ENCODE measurements at regions of chr10 and their contacts with region 1.

Region 1: GRCh38 chr10:79195091-79195923 is 126.5 kb downstream of the ZMIZ1 start:
- DNase-seq: peak; percentile 84
- H3K4me3 Mint-ChIP-seq: no peak overlapping the region
- H3K27ac Mint-ChIP-seq: no peak overlapping the region
- H3K4me1 Mint-ChIP-seq: peaks cover 5% of the 10 kb centered on the region
- H3K27me3 Mint-ChIP-seq: no peaks in the 10 kb centered on the region

Region 2: GRCh38 chr10:77846718-77847630 is 1348.3 kb before region 1 on chr10:
- CTCF ChIA-PET with region 1: no interaction called
- intact Hi-C with region 1: loop called (anchors 10 kb)
- DNase-seq: peak; percentile 76
- H3K4me3 Mint-ChIP-seq: no peak overlapping the region
- H3K27ac Mint-ChIP-seq: no peak overlapping the region
- H3K4me1 Mint-ChIP-seq: peaks cover 3% of the 10 kb centered on the region
- H3K27me3 Mint-ChIP-seq: no peaks in the 10 kb centered on the region

Region 3: DNA sequence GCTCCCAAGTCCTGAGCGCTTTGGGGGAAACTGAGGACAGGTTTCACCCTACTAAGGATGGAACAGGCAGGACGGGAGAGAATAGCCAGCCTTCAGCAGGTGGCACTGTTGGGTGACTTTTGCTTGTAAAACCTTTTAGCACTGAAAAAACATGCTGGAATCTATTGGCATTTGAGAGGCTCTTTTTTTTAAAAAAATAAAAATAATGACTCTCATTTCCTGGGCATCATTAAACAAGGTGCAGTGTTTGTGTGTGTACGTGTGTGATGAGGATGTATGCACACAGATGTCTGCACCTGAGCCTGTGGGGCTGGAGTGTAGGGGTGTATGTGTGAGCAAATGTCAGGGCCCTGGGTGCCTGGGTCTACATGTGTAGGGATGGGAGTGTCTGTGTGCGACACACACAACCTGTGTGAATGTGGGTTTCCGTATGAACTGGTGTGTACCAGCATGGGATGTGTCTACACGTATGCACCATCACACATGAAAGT is 983.7 kb before region 1 on chr10:
- CTCF ChIA-PET with region 1: interaction called, 5 read pairs
- intact Hi-C with region 1: loop called (anchors 1 kb)
- DNase-seq: peak; percentile 47
- H3K4me3 Mint-ChIP-seq: no peak overlapping the region
- H3K27ac Mint-ChIP-seq: no peak overlapping the region
- H3K4me1 Mint-ChIP-seq: peaks cover 1% of the 10 kb centered on the region
- H3K27me3 Mint-ChIP-seq: peaks cover 4% of the 10 kb centered on the region

Region 4: DNA sequence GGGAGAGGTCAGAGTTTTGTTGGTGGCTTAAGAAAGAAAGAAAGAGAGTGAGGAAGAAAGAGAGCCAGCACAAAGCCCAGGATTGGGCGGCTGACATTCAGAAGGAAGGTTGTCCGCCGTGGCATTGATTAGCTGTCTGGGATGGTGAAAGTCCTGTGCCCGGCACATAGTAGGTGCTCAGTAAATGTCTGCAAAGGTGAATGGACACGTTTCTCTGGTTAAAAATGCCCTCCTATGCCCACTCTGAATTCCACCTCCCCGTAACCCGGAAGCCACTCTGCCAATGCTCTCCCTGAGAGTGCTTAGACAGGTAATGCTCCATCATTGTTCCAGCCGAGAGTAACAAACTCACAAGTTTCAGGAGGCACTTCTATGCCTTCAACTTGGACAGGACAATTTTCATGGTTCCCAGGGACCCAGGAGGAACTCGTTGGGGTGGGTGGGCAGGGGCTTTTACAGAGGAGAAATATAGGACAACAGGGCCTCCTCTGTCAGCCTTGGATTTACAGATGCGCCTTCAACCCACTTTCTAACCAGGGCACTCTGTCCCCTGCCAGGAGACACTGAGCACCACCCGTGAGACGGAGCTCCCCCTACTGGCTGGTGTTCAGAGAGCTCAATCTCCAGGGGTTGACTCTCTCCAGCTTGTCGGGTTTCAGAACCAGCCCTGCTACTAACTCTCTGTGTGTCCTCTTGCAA is 538.0 kb before region 1 on chr10:
- CTCF ChIA-PET with region 1: interaction called, 5 read pairs
- intact Hi-C with region 1: loop called (anchors 5 kb)
- DNase-seq: peak; percentile 85
- H3K4me3 Mint-ChIP-seq: no peak overlapping the region
- H3K27ac Mint-ChIP-seq: no peak overlapping the region
- H3K4me1 Mint-ChIP-seq: no peaks in the 10 kb centered on the region
- H3K27me3 Mint-ChIP-seq: peaks cover 9% of the 10 kb centered on the region

Region 5: GRCh38 chr10:78899996-78900714 is 295.2 kb before region 1 on chr10:
- CTCF ChIA-PET with region 1: no interaction called
- intact Hi-C with region 1: no loop called
- DNase-seq: no peak
- H3K4me3 Mint-ChIP-seq: no peak overlapping the region
- H3K27ac Mint-ChIP-seq: no peak overlapping the region
- H3K4me1 Mint-ChIP-seq: no peaks in the 10 kb centered on the region
- H3K27me3 Mint-ChIP-seq: no peaks in the 10 kb centered on the region

Region 6: DNA sequence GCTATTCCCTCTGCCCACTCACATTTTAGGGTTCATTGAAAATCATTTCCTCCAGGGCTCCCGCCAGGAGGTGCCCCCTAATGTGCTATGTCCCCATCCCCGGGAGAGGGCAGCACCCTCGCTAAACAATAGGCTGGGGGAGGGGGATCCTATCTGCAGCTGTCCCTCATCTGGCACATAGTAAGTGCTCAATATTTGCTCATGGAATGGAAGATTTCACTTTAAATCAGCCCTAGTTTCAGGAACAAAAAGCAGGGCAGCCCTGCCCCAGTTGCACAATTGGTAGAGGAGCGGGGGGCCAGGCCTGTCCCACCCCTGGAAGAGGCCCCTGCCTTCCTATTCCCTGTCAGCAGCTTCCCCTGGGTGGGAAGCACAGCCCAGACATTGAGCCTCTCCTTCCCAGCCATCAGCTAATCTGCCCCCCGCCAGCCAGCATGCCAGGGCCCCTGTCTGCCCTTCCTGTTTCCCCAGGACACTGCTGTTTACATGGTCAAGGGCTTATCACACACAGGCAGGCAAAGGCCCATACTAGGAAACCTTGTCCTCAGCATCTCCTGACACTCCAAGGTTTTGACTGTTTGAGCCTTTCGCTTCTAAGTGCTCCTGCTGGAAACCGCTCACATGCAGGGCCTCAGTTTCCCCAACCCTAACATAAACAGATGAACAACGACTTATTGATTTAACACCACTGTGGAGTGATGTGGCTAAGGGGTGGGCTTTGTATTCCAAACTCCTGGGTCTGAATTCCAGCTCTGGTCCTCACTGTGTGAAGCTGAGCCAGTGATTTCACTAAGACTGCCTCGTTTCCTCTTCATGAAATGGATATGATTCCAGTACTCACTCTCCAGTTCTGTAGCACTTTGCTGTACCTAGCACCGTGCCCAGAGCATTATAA is 257.3 kb before region 1 on chr10:
- CTCF ChIA-PET with region 1: interaction called, 7 read pairs
- intact Hi-C with region 1: loop called (anchors 5 kb)
- DNase-seq: peak; percentile 39
- H3K4me3 Mint-ChIP-seq: no peak overlapping the region
- H3K27ac Mint-ChIP-seq: no peak overlapping the region
- H3K4me1 Mint-ChIP-seq: no peaks in the 10 kb centered on the region
- H3K27me3 Mint-ChIP-seq: no peaks in the 10 kb centered on the region

Region 7: GRCh38 chr10:78972947-78973900 is 222.1 kb before region 1 on chr10:
- CTCF ChIA-PET with region 1: interaction called, 4 read pairs
- intact Hi-C with region 1: loop called (anchors 1 kb)
- DNase-seq: peak; percentile 80
- H3K4me3 Mint-ChIP-seq: peak overlapping the region; percentile 37
- H3K27ac Mint-ChIP-seq: peak overlapping the region; percentile 8
- H3K4me1 Mint-ChIP-seq: peaks cover 9% of the 10 kb centered on the region
- H3K27me3 Mint-ChIP-seq: no peaks in the 10 kb centered on the region

Region 8: GRCh38 chr10:79255007-79255507 is 59.8 kb after region 1 on chr10:
- CTCF ChIA-PET with region 1: no interaction called
- intact Hi-C with region 1: no loop called
- DNase-seq: no peak
- H3K4me3 Mint-ChIP-seq: no peak overlapping the region
- H3K27ac Mint-ChIP-seq: no peak overlapping the region
- H3K4me1 Mint-ChIP-seq: peaks cover 7% of the 10 kb centered on the region
- H3K27me3 Mint-ChIP-seq: no peaks in the 10 kb centered on the region

Region 9: GRCh38 chr10:79472951-79473350 is 277.6 kb after region 1 on chr10:
- CTCF ChIA-PET with region 1: no interaction called
- intact Hi-C with region 1: no loop called
- DNase-seq: no peak
- H3K4me3 Mint-ChIP-seq: no peak overlapping the region
- H3K27ac Mint-ChIP-seq: no peak overlapping the region
- H3K4me1 Mint-ChIP-seq: no peaks in the 10 kb centered on the region
- H3K27me3 Mint-ChIP-seq: peaks cover 2% of the 10 kb centered on the region